MCF 10A (cell line): ENCODE measurements at regions of chr12 and their contacts with region 1.

Region 1: GRCh38 chr12:101876861-101877815 is at the start of gene DRAM1:
- DNase-seq: peak; percentile 89
- H3K4me3 Mint-ChIP-seq: peak within 1 kb of the TSS; percentile 82
- H3K27ac Mint-ChIP-seq: peak within 1 kb of the TSS; percentile 85
- H3K4me1 Mint-ChIP-seq: peaks cover 10% of the 10 kb centered on the region
- H3K27me3 Mint-ChIP-seq: no peaks in the 10 kb centered on the region
- CTCF ChIP-seq: no peak
- total RNA-seq, gene DRAM1: 8.7 and 10.1 TPM in 2 replicates

Region 2: GRCh38 chr12:101854747-101855146 is 22.4 kb before region 1 on chr12:
- CTCF ChIA-PET with region 1: interaction called, 3 read pairs
- POLR2A ChIA-PET with region 1: interaction called, 13 read pairs
- intact Hi-C with region 1: no loop called
- DNase-seq: no peak
- H3K4me3 Mint-ChIP-seq: no peak overlapping the region
- H3K27ac Mint-ChIP-seq: peak overlapping the region; percentile 29
- H3K4me1 Mint-ChIP-seq: peaks cover 21% of the 10 kb centered on the region
- H3K27me3 Mint-ChIP-seq: no peaks in the 10 kb centered on the region
- CTCF ChIP-seq: no peak

Region 3: DNA sequence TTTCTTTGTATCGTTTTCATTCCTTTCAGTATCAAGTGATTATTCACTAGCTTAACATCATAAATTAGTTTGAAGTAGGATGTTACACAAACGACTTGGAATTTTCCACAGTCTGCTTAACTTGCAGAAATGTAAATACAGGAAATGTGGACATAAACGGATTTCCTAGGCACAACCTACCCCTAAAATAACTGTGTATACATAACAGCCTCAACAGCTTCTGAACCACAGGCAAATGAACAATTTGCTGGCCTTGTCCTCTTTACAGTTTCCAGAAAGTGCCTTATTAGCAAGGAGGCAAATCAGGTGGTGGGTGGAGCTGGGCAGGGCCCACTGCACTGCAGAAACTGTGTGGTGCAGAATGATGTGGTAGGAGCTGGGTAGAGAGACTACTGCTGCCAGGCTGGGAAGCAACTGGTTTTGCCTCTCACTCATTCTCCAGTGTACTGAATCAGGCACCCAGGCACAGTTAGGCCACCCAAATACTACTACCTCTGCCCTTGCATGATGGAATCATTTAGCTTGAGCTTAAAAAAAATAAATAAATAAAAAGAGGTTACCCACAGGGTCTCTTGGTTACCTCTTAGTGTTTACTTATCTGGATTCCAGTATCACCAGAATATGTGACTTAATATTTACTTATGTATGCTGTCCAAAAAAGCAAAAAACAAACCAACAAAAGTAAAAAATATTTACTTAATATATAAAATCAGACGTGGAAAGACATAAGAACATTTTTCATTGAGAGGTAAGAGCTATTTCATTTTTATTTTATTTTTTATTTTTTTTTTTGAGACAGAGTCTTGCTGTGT is 14.5 kb after region 1 on chr12:
- CTCF ChIA-PET with region 1: interaction called, 8 read pairs
- POLR2A ChIA-PET with region 1: interaction called, 16 read pairs
- intact Hi-C with region 1: no loop called
- DNase-seq: peak; percentile 31
- H3K4me3 Mint-ChIP-seq: no peak overlapping the region
- H3K27ac Mint-ChIP-seq: no peak overlapping the region
- H3K4me1 Mint-ChIP-seq: peaks cover 6% of the 10 kb centered on the region
- H3K27me3 Mint-ChIP-seq: no peaks in the 10 kb centered on the region
- CTCF ChIP-seq: no peak